BJ (cell line): ENCODE measurements at regions of chr10 and their contacts with region 1.

Region 1: GRCh38 chr10:21273400-21273932 is 252.0 kb downstream of the SKIDA1 start:
- DNase-seq: no peak
- H3K4me3 ChIP-seq: no peak overlapping the region
- H3K27me3 ChIP-seq: no peaks in the 10 kb centered on the region
- CTCF ChIP-seq: no peak

Region 2: GRCh38 chr10:21078410-21079329 is 194.8 kb before region 1 on chr10:
- CTCF ChIA-PET with region 1: interaction called, 71 read pairs
- POLR2A ChIA-PET with region 1: no interaction called
- DNase-seq: no peak
- H3K4me3 ChIP-seq: no peak overlapping the region
- H3K27me3 ChIP-seq: no peaks in the 10 kb centered on the region
- CTCF ChIP-seq: peak; percentile 80

Region 3: GRCh38 chr10:21257926-21258325 is 15.5 kb before region 1 on chr10:
- CTCF ChIA-PET with region 1: interaction called, 15 read pairs
- POLR2A ChIA-PET with region 1: no interaction called
- DNase-seq: peak; percentile 17
- H3K4me3 ChIP-seq: no peak overlapping the region
- H3K27me3 ChIP-seq: no peaks in the 10 kb centered on the region; the same call in none of the 2 replicates
- CTCF ChIP-seq: no peak

Region 4: DNA sequence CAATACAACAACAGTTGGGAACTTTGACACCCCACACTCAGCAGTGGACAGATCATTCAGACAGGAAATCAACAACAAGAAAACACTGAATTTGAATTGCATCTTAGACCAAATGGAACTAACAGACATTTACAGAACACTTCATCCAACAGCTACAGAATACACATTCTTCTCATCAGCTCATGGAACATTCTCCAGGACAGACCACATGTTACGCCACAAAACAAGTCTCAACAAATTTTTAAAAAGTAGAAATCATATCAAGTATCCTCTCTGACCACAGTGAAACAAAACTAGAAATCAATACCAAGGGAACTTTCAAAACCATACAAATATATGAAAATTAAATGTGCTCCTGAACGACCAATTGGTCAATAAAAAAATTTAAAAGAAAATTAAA is 517.8 kb after region 1 on chr10:
- CTCF ChIA-PET with region 1: no interaction called
- POLR2A ChIA-PET with region 1: no interaction called
- DNase-seq: no peak
- H3K4me3 ChIP-seq: no peak overlapping the region
- H3K27me3 ChIP-seq: no peaks in the 10 kb centered on the region
- CTCF ChIP-seq: no peak